Caco-2 (cell line): ENCODE measurements at regions of chr20 and their contacts with region 1.

Region 1: DNA sequence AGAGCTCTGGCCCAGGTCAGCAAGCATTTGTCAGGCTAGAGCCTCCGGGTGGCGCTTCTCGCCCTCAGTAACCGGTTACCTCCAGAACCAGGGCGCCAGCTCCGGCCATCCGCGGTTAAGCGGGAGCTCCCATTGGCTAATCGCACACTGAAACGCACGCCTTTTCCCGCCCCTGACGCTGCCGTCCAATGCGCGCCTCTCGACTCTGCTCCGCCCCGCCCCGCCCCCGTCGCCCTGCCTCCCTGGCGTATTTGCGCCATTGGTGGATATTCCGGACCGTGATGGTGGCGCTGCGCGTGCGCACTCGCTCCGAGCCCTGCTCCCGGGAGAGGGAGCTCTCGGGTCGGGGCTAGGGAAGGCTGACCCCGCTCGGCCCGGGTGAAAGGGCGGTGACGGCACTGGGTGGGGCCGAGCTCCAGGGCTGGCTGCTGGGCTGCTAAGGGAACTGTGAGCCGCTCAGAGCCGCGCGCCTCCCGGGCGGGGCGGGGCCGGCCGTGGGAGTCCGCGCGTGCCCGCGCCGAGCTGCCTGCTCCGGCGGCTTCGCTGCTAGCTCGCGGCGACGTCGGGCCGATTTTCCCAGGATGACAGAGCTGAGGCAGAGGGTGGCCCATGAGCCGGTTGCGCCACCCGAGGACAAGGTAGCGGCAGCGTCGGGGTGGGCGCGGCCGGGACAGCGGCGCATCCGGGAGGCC is at the start of gene CDS2:
- DNase-seq: peak; percentile 100
- H3K4me3 ChIP-seq: peak within 1 kb of the TSS; percentile 95
- H3K4me3 Mint-ChIP-seq: peak within 1 kb of the TSS; percentile 86
- H3K27ac Mint-ChIP-seq: peak within 1 kb of the TSS; percentile 74
- H3K4me1 ChIP-seq: peaks cover 7% of the 10 kb centered on the region
- H3K4me1 Mint-ChIP-seq: peaks cover 13% of the 10 kb centered on the region
- H3K27me3 ChIP-seq: no peaks in the 10 kb centered on the region
- H3K27me3 Mint-ChIP-seq: no peaks in the 10 kb centered on the region
- CTCF ChIP-seq: peak; percentile 49 to 74
- total RNA-seq, gene CDS2: 46.7 and 53.8 TPM in 2 replicates

Region 2: DNA sequence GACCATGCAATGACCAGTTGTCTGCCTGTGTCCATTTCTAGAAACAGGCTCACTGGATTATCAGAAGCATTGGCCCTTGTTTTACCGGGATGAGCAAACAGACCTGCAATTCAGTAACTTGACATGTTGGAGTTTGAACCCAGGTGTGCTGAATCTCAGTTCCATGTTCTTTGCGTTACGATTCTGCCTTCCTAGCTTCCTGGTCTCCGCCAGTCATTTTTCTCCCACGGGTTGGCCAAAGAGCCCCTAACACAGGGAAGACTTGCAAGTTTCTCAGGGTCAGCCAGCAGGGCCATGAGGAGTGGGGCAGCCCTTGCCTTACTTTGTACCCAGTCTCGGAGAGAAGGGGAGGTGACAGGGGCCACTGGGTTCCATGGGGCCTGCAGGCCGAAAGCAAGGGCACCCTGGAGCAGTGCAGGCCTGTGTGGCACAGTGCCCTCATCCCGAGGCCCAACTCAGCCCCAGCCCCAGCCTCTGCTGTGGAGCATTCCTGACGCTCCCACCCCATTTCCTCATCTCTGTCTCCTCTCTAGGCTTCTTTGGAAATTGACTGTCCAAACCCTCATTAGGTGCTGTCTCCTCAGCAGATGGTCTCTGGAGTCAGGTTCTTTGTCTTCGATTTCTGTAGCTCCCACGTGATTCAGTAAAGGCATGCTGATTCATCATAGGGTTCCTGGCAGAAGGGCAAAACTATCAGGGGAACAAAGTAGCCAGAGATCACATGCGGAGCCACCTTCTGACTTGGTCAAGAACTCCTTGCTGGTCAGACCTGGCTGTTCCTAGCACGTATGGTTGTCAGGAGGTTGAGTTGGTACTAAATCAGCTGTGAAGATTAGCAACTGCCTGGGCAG is 23.8 kb after region 1 on chr20:
- CTCF ChIA-PET with region 1: interaction called, 15 read pairs
- POLR2A ChIA-PET with region 1: no interaction called
- intact Hi-C with region 1: loop called (anchors 1 kb)
- DNase-seq: peak in 1 of 2 experiments; percentile 10
- H3K4me3 ChIP-seq: no peak overlapping the region
- H3K4me3 Mint-ChIP-seq: no peak overlapping the region
- H3K27ac Mint-ChIP-seq: no peak overlapping the region
- H3K4me1 ChIP-seq: peaks cover 27% of the 10 kb centered on the region
- H3K4me1 Mint-ChIP-seq: peaks cover 15% of the 10 kb centered on the region
- H3K27me3 ChIP-seq: no peaks in the 10 kb centered on the region
- H3K27me3 Mint-ChIP-seq: no peaks in the 10 kb centered on the region
- CTCF ChIP-seq: no peak

Region 3: GRCh38 chr20:5181492-5181891 is 54.8 kb after region 1 on chr20:
- CTCF ChIA-PET with region 1: interaction called, 17 read pairs
- POLR2A ChIA-PET with region 1: no interaction called
- intact Hi-C with region 1: no loop called
- DNase-seq: no peak
- H3K4me3 ChIP-seq: no peak overlapping the region
- H3K4me3 Mint-ChIP-seq: no peak overlapping the region
- H3K27ac Mint-ChIP-seq: no peak overlapping the region
- H3K4me1 ChIP-seq: no peaks in the 10 kb centered on the region
- H3K4me1 Mint-ChIP-seq: no peaks in the 10 kb centered on the region
- H3K27me3 ChIP-seq: no peaks in the 10 kb centered on the region
- H3K27me3 Mint-ChIP-seq: no peaks in the 10 kb centered on the region
- CTCF ChIP-seq: no peak

Region 4: GRCh38 chr20:5205348-5206210 is 78.9 kb after region 1 on chr20:
- CTCF ChIA-PET with region 1: interaction called, 11 read pairs
- POLR2A ChIA-PET with region 1: no interaction called
- intact Hi-C with region 1: loop called (anchors 1 kb)
- DNase-seq: peak; percentile 84 to 86
- H3K4me3 ChIP-seq: no peak overlapping the region
- H3K4me3 Mint-ChIP-seq: no peak overlapping the region
- H3K27ac Mint-ChIP-seq: no peak overlapping the region
- H3K4me1 ChIP-seq: no peaks in the 10 kb centered on the region
- H3K4me1 Mint-ChIP-seq: no peaks in the 10 kb centered on the region
- H3K27me3 ChIP-seq: no peaks in the 10 kb centered on the region
- H3K27me3 Mint-ChIP-seq: no peaks in the 10 kb centered on the region
- CTCF ChIP-seq: peak; percentile 92 to 95

Region 5: DNA sequence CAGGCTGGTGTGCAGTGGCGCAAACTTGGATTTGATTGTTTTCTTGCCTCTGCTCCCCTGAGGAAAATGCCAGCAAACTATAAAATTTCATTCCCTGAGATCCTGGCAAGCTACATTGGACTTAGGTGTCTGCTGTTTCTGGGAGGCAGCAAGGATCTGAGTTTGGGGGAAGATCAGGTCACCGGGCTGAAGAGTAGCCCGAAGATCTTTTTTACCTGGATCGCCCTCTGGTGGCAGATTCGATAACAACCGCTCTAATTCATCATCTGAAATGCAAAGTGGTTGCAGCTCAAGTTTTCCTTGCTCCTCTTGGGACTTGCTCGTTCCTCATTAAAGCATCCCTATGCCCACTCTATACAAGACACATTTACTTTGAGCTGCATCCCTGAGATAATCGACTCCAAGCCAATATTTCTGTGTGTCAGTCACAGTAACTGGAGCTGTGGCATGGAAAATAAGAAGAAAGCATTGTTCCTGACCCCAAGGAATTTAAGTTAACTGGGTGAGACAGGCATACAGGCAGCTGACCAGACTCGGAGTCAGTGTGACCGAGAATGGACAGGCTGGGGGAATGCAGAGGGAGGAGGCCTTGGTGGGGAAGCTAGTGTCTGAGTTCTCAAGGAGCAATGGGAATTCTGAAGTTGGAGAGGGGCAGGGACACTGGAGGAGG is 321.9 kb after region 1 on chr20:
- CTCF ChIA-PET with region 1: interaction called, 3 read pairs
- POLR2A ChIA-PET with region 1: no interaction called
- intact Hi-C with region 1: loop called (anchors 10 kb)
- DNase-seq: peak; percentile 64 to 76
- H3K4me3 ChIP-seq: no peak overlapping the region
- H3K4me3 Mint-ChIP-seq: no peak overlapping the region
- H3K27ac Mint-ChIP-seq: no peak overlapping the region
- H3K4me1 ChIP-seq: no peaks in the 10 kb centered on the region
- H3K4me1 Mint-ChIP-seq: peaks cover under 1% of the 10 kb centered on the region
- H3K27me3 ChIP-seq: 0 out of 2 replicates have a peak, but pooled peaks cover 1% of the 10 kb centered on the region
- H3K27me3 Mint-ChIP-seq: peaks cover 7% of the 10 kb centered on the region
- CTCF ChIP-seq: peak; percentile 61 to 74